Motor neuron (in vitro differentiated cells): ENCODE measurements at regions of chr1 and their contacts with region 1.

Region 1: DNA sequence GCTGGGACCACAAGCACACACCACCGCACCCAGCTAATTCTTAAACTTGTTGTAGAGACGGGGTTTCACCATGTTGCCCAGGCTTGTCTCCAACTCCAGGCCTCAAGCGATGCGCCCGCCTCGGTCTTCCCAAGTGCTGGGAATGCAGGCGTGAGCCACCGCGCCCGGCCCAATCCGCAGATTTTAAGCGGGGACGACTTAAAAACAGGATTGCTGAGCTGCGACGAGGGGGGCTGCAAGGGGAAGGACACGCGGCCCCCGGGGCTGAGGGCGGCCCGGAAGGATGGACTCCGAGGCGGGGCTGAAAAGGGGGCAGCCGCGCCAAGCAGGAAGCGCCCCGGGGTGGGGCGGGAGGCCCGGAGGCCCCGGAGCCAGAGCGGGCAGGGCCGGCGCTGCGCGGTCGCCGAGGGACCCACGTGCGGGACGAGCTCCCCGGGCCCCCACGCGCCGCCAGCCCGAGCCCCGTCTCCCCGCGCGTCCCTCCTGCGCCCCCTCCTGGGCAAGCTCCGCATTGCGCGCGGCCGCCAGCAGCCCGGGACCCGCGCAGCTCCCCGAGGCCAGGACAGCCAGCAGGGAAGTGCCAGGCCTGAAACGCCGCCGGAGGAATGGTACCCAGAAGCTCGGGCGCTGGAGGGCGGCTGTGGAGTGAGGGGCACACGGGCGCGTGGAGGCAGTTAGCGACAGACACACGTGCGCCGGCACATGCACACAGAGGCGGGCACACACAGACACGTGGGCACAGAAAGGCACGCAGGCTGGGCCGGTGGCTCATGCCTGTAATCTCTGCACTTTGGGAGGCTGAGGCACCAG is 5.5 kb upstream of the PRKCZ start:
- ATAC-seq: peak; percentile 75 to 93 (median 82)
- H3K4me3 ChIP-seq: peak overlapping the region; percentile 1 to 22 (median 10)
- H3K27ac ChIP-seq: no peak overlapping the region
- H3K4me1 ChIP-seq: peaks cover 3 to 15% of the 10 kb centered on the region in 2 donors

Region 2: DNA sequence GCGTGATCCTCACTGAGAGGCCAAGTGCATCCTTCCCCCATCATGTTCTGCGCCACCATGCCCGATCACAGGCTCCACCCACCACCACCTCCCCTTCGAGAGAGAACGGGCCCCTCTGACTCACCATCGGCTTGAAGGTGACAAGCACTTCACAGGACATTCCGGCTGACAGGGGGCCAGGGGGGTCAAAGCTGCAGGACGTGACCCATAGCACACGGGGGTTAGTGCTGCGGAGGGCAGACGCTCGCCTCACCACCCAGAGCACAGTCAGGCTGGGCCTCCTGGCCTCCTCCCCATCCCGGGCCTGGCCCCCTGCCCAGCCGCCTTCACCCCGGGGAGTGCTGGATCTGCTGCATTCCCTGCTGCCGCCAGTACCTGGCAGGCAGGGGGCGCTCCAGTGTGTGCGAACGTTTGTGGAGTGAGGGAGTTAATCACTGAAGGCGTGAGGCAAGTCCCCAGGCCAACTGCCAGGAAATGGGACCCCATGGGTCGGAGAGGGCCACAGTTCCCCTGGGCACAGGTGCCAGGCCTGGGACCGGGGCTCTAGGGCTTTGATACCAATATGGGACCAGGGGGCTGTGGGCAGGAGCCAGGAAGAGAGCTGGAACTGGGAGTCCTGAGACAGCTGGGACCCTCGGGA is 84.8 kb before region 1 on chr1:
- in situ Hi-C with region 1: loop called in 1 of 9 experiments (anchors 10 kb)
- ATAC-seq: peak; percentile 88 to 98 (median 90)
- H3K4me3 ChIP-seq: no peak overlapping the region
- H3K27ac ChIP-seq: no peak overlapping the region
- H3K4me1 ChIP-seq: peaks cover 0 to 14% of the 10 kb centered on the region in 2 donors